ENCODE measurements at regions of chr4 and their contacts with region 1.

Region 1: DNA sequence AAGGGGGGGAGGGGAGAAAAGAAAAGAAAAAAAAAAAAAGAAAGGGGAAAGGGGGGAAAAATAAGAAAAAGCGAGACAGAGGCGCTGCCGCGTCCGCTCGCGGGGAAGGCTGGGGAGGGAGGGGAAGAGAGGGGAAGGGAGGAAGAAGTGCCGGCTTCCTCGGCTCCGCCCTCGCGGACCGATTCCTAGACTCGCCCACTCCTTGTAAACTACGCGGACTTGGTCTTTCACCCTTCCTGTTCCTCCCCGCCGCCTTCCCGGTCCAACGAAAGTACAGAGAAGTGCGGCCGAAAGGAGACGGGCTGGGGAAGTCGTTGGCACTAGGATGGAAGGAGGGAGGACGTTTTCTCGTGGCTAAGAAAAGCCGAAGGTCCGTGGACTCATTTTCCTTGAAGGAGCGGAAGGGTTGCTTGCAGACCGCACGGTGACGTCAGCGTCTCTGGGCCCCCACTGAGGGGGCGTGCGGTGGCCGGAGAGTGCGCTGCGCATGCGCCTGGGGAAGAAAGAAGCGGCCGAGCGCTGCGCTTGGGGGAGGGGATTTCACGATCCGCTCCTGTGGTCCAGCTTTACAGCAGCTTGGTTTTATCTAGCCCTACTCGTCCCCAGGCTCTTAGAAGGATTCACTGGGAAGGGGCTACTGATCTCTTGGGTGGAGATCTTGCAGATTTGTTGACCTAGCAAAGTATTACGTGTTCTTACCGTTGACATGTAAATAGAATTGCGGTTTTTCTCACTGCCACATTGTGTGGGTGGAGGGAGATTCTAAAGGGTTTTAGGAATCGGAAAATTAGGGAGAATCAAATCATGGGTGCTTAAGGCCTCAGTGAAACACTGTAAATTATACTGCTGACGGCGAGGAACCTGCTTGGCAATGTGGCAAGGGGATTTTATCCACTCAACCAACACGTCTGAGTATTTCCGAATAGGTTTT is at the start of gene CCNI:
- DNase-seq: peak; percentile 91
- ATAC-seq: peak; percentile 62
- H3K4me3 ChIP-seq: peak within 1 kb of the TSS; percentile 94
- H3K27ac ChIP-seq: peak within 1 kb of the TSS; percentile 96
- H3K4me1 ChIP-seq: peaks cover 25% of the 10 kb centered on the region
- H3K27me3 ChIP-seq: no peaks in the 10 kb centered on the region
- CTCF ChIP-seq: no peak
- total RNA-seq, gene CCNI: 60.1 and 73.5 TPM in 2 replicates

Region 2: GRCh38 chr4:76546282-76547171 is 529.6 kb before region 1 on chr4:
- CTCF ChIA-PET with region 1: no interaction called
- POLR2A ChIA-PET with region 1: no interaction called
- intact Hi-C with region 1: no loop called
- DNase-seq: peak; percentile 82
- ATAC-seq: peak; percentile 78
- H3K4me3 ChIP-seq: peak overlapping the region; percentile 45; the same call in 1 of the 2 replicates
- H3K27ac ChIP-seq: peak overlapping the region; percentile 97
- H3K4me1 ChIP-seq: peaks cover 37% of the 10 kb centered on the region
- H3K27me3 ChIP-seq: no peaks in the 10 kb centered on the region
- CTCF ChIP-seq: no peak

Region 3: DNA sequence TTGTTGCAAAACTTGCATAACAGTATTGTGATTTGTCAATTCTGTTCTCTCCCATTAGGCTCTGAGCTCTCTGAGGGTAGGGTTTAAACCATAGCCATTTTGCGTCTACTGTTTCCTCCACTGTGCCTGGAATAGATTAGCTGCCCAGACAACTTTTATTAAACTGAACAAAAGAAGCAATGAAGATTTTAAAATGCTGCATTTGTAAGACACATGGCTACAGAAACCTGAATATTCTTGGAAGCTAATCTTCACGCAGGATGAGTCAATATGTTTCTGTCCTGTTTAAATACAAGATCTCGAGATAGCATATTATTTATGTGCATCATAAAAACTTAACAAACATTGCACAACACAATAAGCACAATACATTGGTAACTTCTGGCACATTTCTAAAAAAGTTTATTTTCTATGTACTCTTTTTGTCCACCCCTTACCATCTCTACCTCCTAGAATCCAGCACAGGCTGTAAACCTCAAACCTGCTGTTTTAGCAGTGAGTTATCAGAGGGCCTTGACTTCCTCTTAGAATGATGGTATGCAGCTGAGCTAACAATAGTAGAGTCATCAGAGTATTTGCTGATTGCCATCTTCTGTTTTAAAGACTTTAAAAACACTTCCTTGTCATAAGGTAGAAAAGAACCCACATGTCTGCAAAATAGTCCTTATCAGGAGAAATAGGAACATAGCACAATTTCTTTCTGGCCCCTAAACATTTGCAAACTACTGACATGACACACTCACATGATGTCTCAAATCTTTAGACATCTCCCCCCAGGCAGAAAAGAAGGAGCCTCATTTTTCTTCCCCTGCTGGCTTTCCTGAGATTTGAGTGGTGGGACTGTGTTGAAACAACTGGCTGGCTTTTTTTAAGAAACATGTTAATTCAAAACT is 70.3 kb after region 1 on chr4:
- CTCF ChIA-PET with region 1: no interaction called
- POLR2A ChIA-PET with region 1: interaction called, 4 read pairs
- intact Hi-C with region 1: loop called (anchors 1 kb)
- DNase-seq: peak; percentile 77
- ATAC-seq: peak; percentile 89
- H3K4me3 ChIP-seq: peak overlapping the region; percentile 50; the same call in 1 of the 2 replicates
- H3K27ac ChIP-seq: peak overlapping the region; percentile 96
- H3K4me1 ChIP-seq: peaks cover 49% of the 10 kb centered on the region
- H3K27me3 ChIP-seq: no peaks in the 10 kb centered on the region
- CTCF ChIP-seq: no peak